ENCODE measurements at regions of chr11 and their contacts with region 1.

Region 1: DNA sequence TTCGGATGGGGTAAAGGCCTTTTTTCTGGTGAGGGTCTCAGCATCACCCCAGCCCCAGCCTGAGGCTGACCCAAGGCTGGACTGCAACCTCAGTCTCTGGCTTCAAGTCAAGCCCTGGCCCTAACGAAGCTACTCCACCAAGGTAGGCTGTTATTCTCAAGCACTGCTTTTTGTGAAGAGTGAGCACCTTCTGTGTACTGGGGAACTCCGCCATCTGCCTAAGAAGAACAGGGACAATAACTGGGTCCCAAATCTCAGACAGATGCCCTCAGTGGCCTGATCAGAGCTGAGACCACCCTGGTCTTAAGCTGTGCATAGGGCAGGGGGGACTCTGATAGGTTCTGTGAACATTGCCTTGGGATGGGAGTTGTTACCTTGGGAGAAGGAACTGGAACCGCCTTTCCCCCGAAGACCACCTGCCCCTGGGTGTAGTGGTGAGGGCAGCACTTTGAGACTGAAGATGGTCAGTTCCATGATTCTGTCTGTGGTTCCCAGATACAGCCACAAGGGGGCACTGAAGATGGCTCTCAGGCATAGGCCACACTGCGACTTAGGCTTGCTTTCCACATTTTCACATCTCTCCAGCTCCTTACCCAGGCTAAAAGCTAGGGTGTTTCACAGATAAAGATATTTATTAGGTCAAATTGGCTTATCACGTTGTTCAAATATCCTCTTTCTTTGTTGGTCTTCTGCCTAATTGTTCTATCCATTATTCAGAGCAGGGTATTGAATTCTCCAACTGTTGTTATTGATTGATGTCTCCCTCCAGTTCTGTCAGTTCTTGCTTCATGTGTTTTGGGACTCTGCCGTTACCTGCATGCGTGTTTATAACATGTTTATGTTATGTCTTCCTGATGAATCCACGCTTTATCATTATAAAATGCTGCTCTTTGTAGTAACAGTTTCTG is 11.8 kb upstream of the UVRAG start:
- DNase-seq: peak; percentile 84
- ATAC-seq: peak; percentile 95
- H3K4me3 Mint-ChIP-seq: no peak overlapping the region
- H3K27ac Mint-ChIP-seq: no peak overlapping the region
- H3K4me1 Mint-ChIP-seq: peaks cover 4% of the 10 kb centered on the region; the same call in 1 of the 2 replicates
- H3K27me3 Mint-ChIP-seq: peaks cover 5% of the 10 kb centered on the region; the same call in 1 of the 2 replicates
- CTCF ChIP-seq: peak; percentile 82

Region 2: GRCh38 chr11:75814686-75815344 is 11.6 kb after region 1 on chr11 and contains the start of gene UVRAG:
- CTCF ChIA-PET with region 1: interaction called, 16 read pairs
- POLR2A ChIA-PET with region 1: no interaction called
- DNase-seq: peak; percentile 98
- ATAC-seq: peak; percentile 91
- H3K4me3 Mint-ChIP-seq: no peak within 1 kb of the TSS
- H3K27ac Mint-ChIP-seq: peak within 1 kb of the TSS; percentile 95
- H3K4me1 Mint-ChIP-seq: peaks cover 19% of the 10 kb centered on the region
- H3K27me3 Mint-ChIP-seq: peaks cover 3% of the 10 kb centered on the region
- CTCF ChIP-seq: no peak
- total RNA-seq, gene UVRAG: 10.9 to 14.5 TPM (median 12.3 TPM) in 3 replicates

Region 3: DNA sequence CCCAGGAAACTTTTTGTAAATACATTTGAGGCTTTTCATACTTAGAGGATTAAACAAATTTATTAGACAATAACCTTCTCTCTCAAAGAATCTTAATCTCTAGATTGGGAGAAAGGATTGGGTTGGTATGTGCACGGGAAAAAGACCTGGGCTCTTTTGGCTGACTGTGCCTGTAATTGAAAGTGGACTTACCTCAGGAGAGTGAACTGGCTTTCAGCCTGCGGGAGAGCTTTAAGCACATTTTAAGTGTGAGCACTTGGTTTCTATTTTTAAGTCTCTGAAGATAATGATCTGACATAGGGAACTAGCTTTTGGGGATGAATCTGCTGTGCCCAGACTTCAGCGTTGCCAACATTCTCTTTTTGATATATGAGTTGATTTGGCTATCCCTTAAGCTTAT is 47.6 kb after region 1 on chr11:
- CTCF ChIA-PET with region 1: no interaction called
- POLR2A ChIA-PET with region 1: interaction called, 10 read pairs
- DNase-seq: no peak
- ATAC-seq: no peak
- H3K4me3 Mint-ChIP-seq: no peak overlapping the region
- H3K27ac Mint-ChIP-seq: no peak overlapping the region
- H3K4me1 Mint-ChIP-seq: peaks cover 3% of the 10 kb centered on the region
- H3K27me3 Mint-ChIP-seq: no peaks in the 10 kb centered on the region
- CTCF ChIP-seq: no peak

Region 4: GRCh38 chr11:75867775-75868374 is 64.7 kb after region 1 on chr11:
- CTCF ChIA-PET with region 1: interaction called, 37 read pairs
- POLR2A ChIA-PET with region 1: no interaction called
- DNase-seq: no peak
- ATAC-seq: peak; percentile 41; the same call in 1 of the 2 replicates
- H3K4me3 Mint-ChIP-seq: no peak overlapping the region
- H3K27ac Mint-ChIP-seq: no peak overlapping the region
- H3K4me1 Mint-ChIP-seq: no peaks in the 10 kb centered on the region
- H3K27me3 Mint-ChIP-seq: no peaks in the 10 kb centered on the region
- CTCF ChIP-seq: peak; percentile 49; the same call in 1 of the 2 replicates

Measured in WTC11 (cell line).